MCF 10A (cell line): ENCODE measurements at regions of chr1 and their contacts with region 1.

Region 1: GRCh38 chr1:151594143-151594625 is 17.7 kb upstream of the SNX27 start:
- DNase-seq: peak; percentile 84
- H3K4me3 Mint-ChIP-seq: no peak overlapping the region
- H3K27ac Mint-ChIP-seq: no peak overlapping the region
- H3K4me1 Mint-ChIP-seq: peaks cover 21% of the 10 kb centered on the region
- H3K27me3 Mint-ChIP-seq: no peaks in the 10 kb centered on the region
- CTCF ChIP-seq: peak; percentile 99

Region 2: DNA sequence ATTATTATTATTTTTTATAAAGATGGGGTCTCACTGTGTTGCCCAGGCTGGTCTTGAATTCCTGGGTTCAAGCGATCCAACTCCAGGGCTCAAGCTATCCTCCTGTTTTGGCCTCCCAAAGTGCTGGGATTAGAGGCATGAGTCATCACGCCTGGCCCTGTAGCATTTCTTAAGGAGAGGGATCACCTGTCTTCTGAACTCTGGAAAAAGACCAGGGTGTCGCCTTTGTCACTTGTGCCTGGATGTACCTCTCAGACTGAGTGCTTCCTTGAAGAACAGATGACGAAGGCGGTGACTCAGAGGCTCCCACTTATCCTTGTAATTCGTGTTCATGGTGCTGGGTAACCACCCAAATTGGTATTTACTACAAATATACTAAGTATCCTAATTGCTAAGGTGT is 85.4 kb before region 1 on chr1:
- CTCF ChIA-PET with region 1: no interaction called
- POLR2A ChIA-PET with region 1: no interaction called
- intact Hi-C with region 1: no loop called
- DNase-seq: peak; percentile 48
- H3K4me3 Mint-ChIP-seq: no peak overlapping the region
- H3K27ac Mint-ChIP-seq: no peak overlapping the region
- H3K4me1 Mint-ChIP-seq: peaks cover 21% of the 10 kb centered on the region
- H3K27me3 Mint-ChIP-seq: peaks cover 26% of the 10 kb centered on the region
- CTCF ChIP-seq: no peak

Region 3: DNA sequence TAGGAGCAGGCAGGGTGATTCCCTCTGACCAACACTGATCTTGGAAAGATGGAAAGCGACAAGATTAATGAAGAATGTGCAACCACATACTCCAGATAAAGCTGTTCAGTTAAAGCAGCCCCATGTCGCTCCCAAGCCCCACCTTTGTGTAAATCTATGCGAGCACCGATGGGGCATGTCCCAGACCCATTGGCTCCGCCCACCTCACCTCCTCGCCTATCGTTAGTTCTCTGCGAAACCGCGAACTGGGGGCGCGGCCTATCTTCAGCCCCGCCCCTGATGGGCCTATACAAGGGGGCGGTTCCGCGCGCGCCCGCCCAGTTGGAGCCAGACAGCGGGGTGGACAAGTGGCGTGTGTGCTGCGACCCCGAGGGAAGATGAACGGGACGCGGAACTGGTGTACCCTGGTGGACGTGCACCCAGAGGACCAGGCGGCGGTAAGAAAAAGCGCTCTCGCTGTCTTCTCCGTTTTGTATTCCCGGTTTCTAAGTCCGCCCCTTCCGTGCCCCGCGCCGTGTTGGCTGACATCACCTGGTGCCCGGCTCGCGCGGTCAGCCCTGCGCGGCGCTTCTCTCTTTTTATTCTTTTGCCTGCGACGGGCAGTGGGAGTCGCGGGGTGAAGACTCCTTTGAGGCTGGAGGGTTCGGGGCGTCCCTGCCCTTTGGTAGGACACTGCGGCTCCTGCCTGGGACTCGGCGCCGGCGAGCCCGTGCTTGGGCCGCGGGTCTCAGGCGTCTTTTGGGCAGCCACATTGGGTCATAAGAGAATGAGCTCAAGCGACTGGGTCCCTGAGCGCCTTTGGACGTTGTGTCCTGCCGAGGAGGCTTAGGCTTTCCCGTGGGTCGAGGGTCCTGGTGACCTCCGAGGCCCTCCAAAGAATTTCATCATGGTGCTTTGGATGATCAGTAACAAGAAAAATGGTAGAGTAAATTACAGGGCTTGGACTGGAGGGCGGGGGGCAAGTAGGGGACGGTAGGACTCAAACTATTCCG is 53.9 kb before region 1 on chr1 and contains the start of gene TUFT1:
- CTCF ChIA-PET with region 1: interaction called, 33 read pairs
- POLR2A ChIA-PET with region 1: interaction called, 5 read pairs
- intact Hi-C with region 1: no loop called
- DNase-seq: peak; percentile 97
- H3K4me3 Mint-ChIP-seq: peak within 1 kb of the TSS; percentile 96
- H3K27ac Mint-ChIP-seq: peak within 1 kb of the TSS; percentile 98
- H3K4me1 Mint-ChIP-seq: peaks cover 62% of the 10 kb centered on the region
- H3K27me3 Mint-ChIP-seq: no peaks in the 10 kb centered on the region
- CTCF ChIP-seq: no peak
- total RNA-seq, gene TUFT1: 90.6 and 162 TPM in 2 replicates

Region 4: GRCh38 chr1:151611832-151612500 is 17.8 kb after region 1 on chr1 and contains the start of gene SNX27:
- CTCF ChIA-PET with region 1: interaction called, 107 read pairs
- POLR2A ChIA-PET with region 1: interaction called, 11 read pairs
- intact Hi-C with region 1: no loop called
- DNase-seq: peak; percentile 96
- H3K4me3 Mint-ChIP-seq: peak within 1 kb of the TSS; percentile 89
- H3K27ac Mint-ChIP-seq: peak within 1 kb of the TSS; percentile 88
- H3K4me1 Mint-ChIP-seq: peaks cover 60% of the 10 kb centered on the region
- H3K27me3 Mint-ChIP-seq: no peaks in the 10 kb centered on the region
- CTCF ChIP-seq: no peak
- total RNA-seq, gene SNX27: 36.9 and 43.1 TPM in 2 replicates

Region 5: GRCh38 chr1:151655371-151655770 is 61.2 kb after region 1 on chr1:
- CTCF ChIA-PET with region 1: interaction called, 10 read pairs
- POLR2A ChIA-PET with region 1: no interaction called
- intact Hi-C with region 1: no loop called
- DNase-seq: no peak
- H3K4me3 Mint-ChIP-seq: no peak overlapping the region
- H3K27ac Mint-ChIP-seq: no peak overlapping the region
- H3K4me1 Mint-ChIP-seq: peaks cover 12% of the 10 kb centered on the region
- H3K27me3 Mint-ChIP-seq: no peaks in the 10 kb centered on the region
- CTCF ChIP-seq: no peak

Region 6: DNA sequence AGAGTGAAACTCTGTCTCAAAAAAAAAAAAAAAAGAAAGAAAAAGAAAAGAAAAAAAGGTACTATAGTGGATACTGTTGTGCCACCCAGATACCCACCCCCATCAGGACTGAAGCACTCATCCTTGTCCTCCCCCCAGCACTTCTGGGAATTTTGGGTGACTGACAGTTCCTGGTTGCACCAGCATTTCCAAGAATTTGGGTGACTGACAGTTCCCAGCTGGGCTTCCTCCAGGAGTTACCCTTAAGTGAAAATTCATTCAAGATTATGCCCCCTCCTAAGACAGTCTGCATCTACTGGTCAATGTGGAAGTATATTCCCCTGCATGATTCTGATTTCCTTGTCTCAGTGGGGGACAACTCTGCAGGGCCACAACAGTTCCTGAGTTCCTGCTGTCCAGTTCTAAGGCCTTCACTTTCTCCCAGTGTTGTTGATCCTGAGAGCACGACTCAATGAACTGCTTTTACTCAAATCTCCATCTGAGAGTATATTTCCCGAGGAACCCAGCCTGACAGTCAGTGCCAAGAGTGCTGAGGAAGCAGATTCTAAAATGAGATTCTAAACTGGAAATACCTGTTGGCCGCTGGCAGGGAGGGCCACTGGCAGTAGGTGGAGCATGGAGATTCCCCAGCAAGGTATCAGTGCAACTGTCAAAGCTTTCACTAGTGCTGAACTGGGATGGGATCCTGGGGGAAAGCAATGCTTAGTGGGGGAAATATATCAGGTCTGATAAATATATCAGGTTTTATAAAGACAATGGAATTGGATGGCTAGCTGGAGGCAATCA is 145.6 kb after region 1 on chr1:
- CTCF ChIA-PET with region 1: interaction called, 45 read pairs
- POLR2A ChIA-PET with region 1: interaction called, 3 read pairs
- intact Hi-C with region 1: loop called (anchors 1 kb)
- DNase-seq: no peak
- H3K4me3 Mint-ChIP-seq: no peak overlapping the region
- H3K27ac Mint-ChIP-seq: no peak overlapping the region
- H3K4me1 Mint-ChIP-seq: peaks cover 6% of the 10 kb centered on the region
- H3K27me3 Mint-ChIP-seq: peaks cover 30% of the 10 kb centered on the region
- CTCF ChIP-seq: no peak

Region 7: GRCh38 chr1:151860504-151861208 is 266.5 kb after region 1 on chr1:
- CTCF ChIA-PET with region 1: no interaction called
- POLR2A ChIA-PET with region 1: no interaction called
- intact Hi-C with region 1: no loop called
- DNase-seq: no peak
- H3K4me3 Mint-ChIP-seq: no peak overlapping the region
- H3K27ac Mint-ChIP-seq: no peak overlapping the region
- H3K4me1 Mint-ChIP-seq: peaks cover 40% of the 10 kb centered on the region
- H3K27me3 Mint-ChIP-seq: no peaks in the 10 kb centered on the region
- CTCF ChIP-seq: no peak